Astrocyte of the cerebellum (primary cell): ENCODE measurements at regions of chr10 and their contacts with region 1.

Region 1: DNA sequence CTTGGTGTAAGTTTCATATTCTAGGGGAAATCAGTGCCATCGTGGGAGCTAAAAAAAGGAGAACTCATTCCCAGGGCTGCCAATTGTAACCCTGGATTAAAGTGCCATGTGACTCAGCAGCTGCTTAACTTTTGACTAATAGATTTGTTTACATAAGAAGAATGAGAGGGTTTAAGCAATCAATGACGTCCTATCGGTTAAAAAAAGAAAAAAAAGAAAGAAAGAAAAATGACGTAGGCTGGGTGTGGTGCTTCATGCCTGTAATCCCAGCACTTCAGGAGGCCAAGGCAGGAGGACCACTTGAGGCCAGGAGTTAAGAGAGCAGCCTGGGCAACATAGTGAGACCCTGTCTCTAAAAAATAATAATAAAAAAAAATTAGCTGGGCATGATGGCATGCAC is 116.2 kb upstream of the AFAP1L2 start:
- DNase-seq: no peak
- H3K4me3 ChIP-seq: no peak overlapping the region
- CTCF ChIP-seq: no peak

Region 2: GRCh38 chr10:114486938-114487814 is 33.3 kb before region 1 on chr10:
- in situ Hi-C with region 1: no loop called
- DNase-seq: no peak
- H3K4me3 ChIP-seq: no peak overlapping the region
- CTCF ChIP-seq: no peak

Region 3: GRCh38 chr10:114556236-114557122 is 36.0 kb after region 1 on chr10:
- in situ Hi-C with region 1: loop called (anchors 5 kb)
- DNase-seq: no peak
- H3K4me3 ChIP-seq: no peak overlapping the region
- CTCF ChIP-seq: no peak